Activated CD4-positive, alpha-beta T cell treated with anti-CD3 and anti-CD28 coated beads for 36 hours (primary cell): ENCODE measurements at regions of chr13 and their contacts with region 1.

Region 1: GRCh38 chr13:46354156-46355091 is 32.6 kb downstream of the RUBCNL start:
- DNase-seq: peak; percentile 53
- ATAC-seq: peak; percentile 94
- H3K4me3 Mint-ChIP-seq: peak overlapping the region; percentile 15
- H3K27ac Mint-ChIP-seq: peak overlapping the region; percentile 90
- H3K4me1 Mint-ChIP-seq: peaks cover 29% of the 10 kb centered on the region
- H3K27me3 Mint-ChIP-seq: peaks cover 2% of the 10 kb centered on the region

Region 2: GRCh38 chr13:46341112-46341711 is 13.2 kb before region 1 on chr13:
- CTCF ChIA-PET with region 1: interaction called, 4 read pairs
- POLR2A ChIA-PET with region 1: interaction called, 3 read pairs
- intact Hi-C with region 1: loop called (anchors 1 kb)
- DNase-seq: peak; percentile 69
- ATAC-seq: peak; percentile 96
- H3K4me3 Mint-ChIP-seq: peak overlapping the region; percentile 67
- H3K27ac Mint-ChIP-seq: peak overlapping the region; percentile 95
- H3K4me1 Mint-ChIP-seq: peaks cover 45% of the 10 kb centered on the region
- H3K27me3 Mint-ChIP-seq: peaks cover 2% of the 10 kb centered on the region

Region 3: GRCh38 chr13:46392967-46393366 is 38.5 kb after region 1 on chr13:
- CTCF ChIA-PET with region 1: no interaction called
- POLR2A ChIA-PET with region 1: no interaction called
- intact Hi-C with region 1: loop called in 1 of 2 experiments (anchors 2 kb)
- DNase-seq: no peak
- ATAC-seq: peak; percentile 67
- H3K4me3 Mint-ChIP-seq: no peak overlapping the region
- H3K27ac Mint-ChIP-seq: no peak overlapping the region
- H3K4me1 Mint-ChIP-seq: peaks cover 18% of the 10 kb centered on the region
- H3K27me3 Mint-ChIP-seq: peaks cover 2% of the 10 kb centered on the region

Region 4: GRCh38 chr13:46844431-46844830 is 490.0 kb after region 1 on chr13:
- CTCF ChIA-PET with region 1: no interaction called
- POLR2A ChIA-PET with region 1: no interaction called
- intact Hi-C with region 1: no loop called
- DNase-seq: no peak
- ATAC-seq: no peak
- H3K4me3 Mint-ChIP-seq: no peak overlapping the region
- H3K27ac Mint-ChIP-seq: no peak overlapping the region
- H3K4me1 Mint-ChIP-seq: no peaks in the 10 kb centered on the region
- H3K27me3 Mint-ChIP-seq: peaks cover 2% of the 10 kb centered on the region